ENCODE measurements at regions of chr5 and their contacts with region 1.

Region 1: GRCh38 chr5:141636413-141637122 is at the starts of genes HDAC3 and RELL2:
- DNase-seq: peak; percentile 94
- H3K4me3 Mint-ChIP-seq: peak within 1 kb of the TSS; percentile 93
- H3K27ac Mint-ChIP-seq: peak within 1 kb of the TSS; percentile 80
- H3K4me1 Mint-ChIP-seq: peaks cover 59% of the 10 kb centered on the region
- H3K27me3 Mint-ChIP-seq: no peaks in the 10 kb centered on the region
- total RNA-seq, gene HDAC3: 72.0 to 77.9 TPM
- total RNA-seq, gene RELL2: 18.8 to 19.4 TPM

Region 2: GRCh38 chr5:141590127-141590526 is 46.4 kb before region 1 on chr5:
- CTCF ChIA-PET with region 1: interaction called, 150 read pairs
- POLR2A ChIA-PET with region 1: interaction called, 30 read pairs
- DNase-seq: no peak
- H3K4me3 Mint-ChIP-seq: no peak overlapping the region
- H3K27ac Mint-ChIP-seq: no peak overlapping the region
- H3K4me1 Mint-ChIP-seq: peaks cover 39% of the 10 kb centered on the region
- H3K27me3 Mint-ChIP-seq: no peaks in the 10 kb centered on the region

Region 3: GRCh38 chr5:141605523-141606277 is 30.9 kb before region 1 on chr5:
- CTCF ChIA-PET with region 1: interaction called, 22 read pairs
- POLR2A ChIA-PET with region 1: interaction called, 10 read pairs
- DNase-seq: peak; percentile 84
- H3K4me3 Mint-ChIP-seq: peak overlapping the region; percentile 63
- H3K27ac Mint-ChIP-seq: peak overlapping the region; percentile 94
- H3K4me1 Mint-ChIP-seq: peaks cover 78% of the 10 kb centered on the region
- H3K27me3 Mint-ChIP-seq: no peaks in the 10 kb centered on the region

Region 4: DNA sequence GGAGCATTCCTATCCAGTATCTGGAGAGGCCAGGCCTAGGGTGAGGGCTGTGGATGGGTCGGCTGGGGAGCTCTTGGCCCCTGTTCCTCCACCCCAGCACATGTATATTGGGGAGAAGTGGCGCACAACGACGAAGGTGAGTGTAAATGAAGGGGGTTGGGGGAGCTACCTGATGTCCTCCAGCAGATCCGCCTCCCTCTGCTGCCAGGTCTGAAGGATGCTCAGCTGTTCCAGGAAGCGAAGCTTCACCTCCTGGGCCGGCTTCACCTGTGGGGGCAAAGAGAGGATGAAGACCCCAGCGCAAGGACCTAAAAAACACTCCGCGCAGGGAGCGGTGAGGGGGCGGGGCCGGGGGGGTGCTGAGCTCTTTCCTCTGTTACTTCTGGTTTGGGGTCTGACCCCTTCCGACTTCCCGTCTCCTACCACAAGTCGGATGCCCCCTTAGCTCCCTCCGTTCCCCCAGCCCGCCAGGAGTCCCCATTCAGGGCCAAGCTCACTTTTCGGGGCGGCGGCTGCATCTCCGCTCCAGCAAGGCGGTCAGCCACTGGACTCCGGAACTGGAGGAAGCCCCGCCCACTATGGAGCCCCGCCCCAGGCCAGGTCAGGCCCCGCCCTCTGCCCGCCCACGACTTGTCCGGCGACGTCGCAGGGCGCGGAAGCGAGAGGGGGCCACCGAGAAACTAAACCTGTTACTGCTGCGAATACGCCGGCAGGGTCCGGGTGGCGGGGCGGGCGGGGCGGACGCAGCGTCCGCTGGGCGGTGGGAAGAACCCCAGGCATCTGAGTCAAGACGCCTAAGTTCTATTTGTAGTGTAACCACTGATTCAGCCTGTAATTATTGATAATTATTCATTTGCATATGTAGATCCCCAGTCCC is 14.5 kb after region 1 on chr5 and contains the start of gene FCHSD1:
- CTCF ChIA-PET with region 1: interaction called, 12 read pairs
- POLR2A ChIA-PET with region 1: interaction called, 98 read pairs
- DNase-seq: peak; percentile 89
- H3K4me3 Mint-ChIP-seq: peak within 1 kb of the TSS; percentile 98
- H3K27ac Mint-ChIP-seq: peak within 1 kb of the TSS; percentile 89
- H3K4me1 Mint-ChIP-seq: peaks cover 32% of the 10 kb centered on the region
- H3K27me3 Mint-ChIP-seq: no peaks in the 10 kb centered on the region
- total RNA-seq, gene FCHSD1: 69.8 to 71.8 TPM

Region 5: DNA sequence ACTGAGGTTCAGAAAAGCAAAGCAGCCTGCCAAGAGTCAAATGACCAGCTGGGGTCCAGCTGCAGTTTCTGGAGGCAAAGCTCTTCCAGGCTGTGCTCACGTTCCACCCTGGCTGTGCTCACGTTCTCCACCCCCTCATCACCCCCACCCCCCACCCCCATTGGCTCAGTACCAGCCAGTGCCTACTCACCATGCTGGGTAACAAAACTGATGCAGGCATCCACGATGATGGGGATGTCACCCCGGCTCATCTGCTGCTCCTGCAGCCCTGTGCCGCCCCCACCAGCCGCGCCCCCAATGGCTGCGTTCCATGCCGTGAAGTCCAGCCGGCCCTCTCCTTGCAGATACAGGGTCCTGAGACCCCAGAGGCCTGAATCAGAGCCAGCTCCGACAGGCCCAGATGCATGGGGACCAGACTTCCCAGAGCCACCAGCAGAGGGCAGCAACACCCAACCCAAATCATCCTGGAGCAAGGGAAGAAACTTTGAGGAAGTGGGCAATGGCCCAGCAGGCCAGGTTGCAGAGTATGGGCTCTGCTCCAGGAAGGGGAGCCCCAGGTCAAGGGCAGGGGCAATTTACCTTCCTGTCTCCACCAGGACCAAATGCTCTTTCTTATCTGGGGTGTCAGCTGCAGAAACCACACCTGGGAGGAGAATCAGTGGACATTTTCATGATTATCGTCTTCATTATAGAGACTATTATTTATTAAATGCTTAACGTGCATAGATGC is 28.3 kb after region 1 on chr5:
- CTCF ChIA-PET with region 1: interaction called, 14 read pairs
- POLR2A ChIA-PET with region 1: interaction called, 3 read pairs
- DNase-seq: peak; percentile 80
- H3K4me3 Mint-ChIP-seq: no peak overlapping the region
- H3K27ac Mint-ChIP-seq: no peak overlapping the region
- H3K4me1 Mint-ChIP-seq: peaks cover 5% of the 10 kb centered on the region
- H3K27me3 Mint-ChIP-seq: no peaks in the 10 kb centered on the region